Astrocyte of the cerebellum (primary cell): ENCODE measurements at regions of chr2 and their contacts with region 1.

Region 1: GRCh38 chr2:173741759-173742158 is 223.4 kb downstream of the SP3 start:
- DNase-seq: no peak
- H3K4me3 ChIP-seq: no peak overlapping the region
- CTCF ChIP-seq: no peak

Region 2: GRCh38 chr2:173059927-173060565 is 681.7 kb before region 1 on chr2:
- in situ Hi-C with region 1: no loop called
- DNase-seq: no peak
- H3K4me3 ChIP-seq: no peak overlapping the region
- CTCF ChIP-seq: no peak

Region 3: DNA sequence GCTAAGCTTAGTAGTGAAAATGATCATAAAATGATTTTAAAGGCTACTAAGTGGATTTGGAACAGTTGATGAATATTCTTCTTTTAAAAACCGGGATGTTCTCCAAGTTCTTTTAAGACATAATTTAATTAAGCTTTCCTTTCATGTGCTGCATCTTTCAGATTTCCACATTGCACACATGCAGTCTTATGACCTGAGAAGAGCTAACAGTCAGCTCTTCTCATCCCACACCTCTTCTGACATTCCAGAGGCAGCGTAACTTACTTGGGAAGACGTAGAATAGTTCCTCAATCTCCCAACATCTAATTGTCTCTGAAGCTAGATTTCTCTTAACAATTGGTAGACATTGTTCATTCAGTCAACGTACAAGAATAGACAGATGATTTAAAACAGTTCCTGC is 41.6 kb after region 1 on chr2:
- in situ Hi-C with region 1: loop called (anchors 5 kb)
- DNase-seq: no peak
- H3K4me3 ChIP-seq: no peak overlapping the region
- CTCF ChIP-seq: no peak